CD4-positive, alpha-beta memory T cell (primary cell): ENCODE measurements at regions of chr7 and their contacts with region 1.

Region 1: DNA sequence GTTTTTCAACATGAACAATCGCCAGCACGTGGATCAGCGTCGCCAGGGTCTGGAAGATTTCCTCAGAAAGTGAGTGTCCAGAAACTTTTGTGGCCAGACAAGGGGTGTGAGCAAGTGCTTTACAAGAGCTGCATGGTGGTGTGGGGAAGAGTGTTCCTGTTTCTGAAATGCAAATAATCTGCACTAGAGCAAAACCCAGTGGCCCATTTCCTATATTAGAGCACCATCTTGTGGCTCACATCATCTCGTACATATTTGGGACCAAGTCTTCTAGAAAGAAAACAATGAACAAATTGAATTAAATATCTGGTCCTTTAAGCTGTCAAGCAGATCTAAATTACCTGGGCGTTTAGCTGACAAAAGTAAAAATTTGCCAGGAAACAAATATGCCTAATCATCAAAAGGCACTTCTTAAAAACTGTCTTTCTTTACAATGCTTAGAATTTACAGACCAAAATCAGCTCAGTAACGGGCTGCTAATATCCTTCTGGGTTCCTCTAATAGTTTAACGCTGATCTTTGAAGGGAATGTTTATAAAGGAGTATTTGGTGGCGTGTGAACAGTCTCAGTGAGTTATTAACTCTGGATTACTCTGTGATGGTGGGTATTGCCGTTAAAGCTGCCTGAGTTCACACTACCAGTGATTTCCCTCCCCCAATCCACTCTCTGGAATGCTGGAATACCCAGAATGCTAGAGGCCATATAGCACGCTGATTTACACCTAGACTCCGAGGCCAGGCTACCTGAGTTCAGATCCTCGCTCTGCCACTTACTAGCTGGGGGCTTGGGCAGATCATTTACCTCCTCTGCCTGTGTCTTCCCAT is 73.6 kb downstream of the SNX10 start:
- DNase-seq: peak; percentile 60 to 67 (median 64)
- H3K4me3 ChIP-seq: no peak overlapping the region
- H3K4me3 Mint-ChIP-seq: no peak overlapping the region
- H3K27ac ChIP-seq: no peak overlapping the region
- H3K27ac Mint-ChIP-seq: peak overlapping the region in 2 of 7 donors; percentile 60 to 65
- H3K4me1 ChIP-seq: peaks cover 8% of the 10 kb centered on the region
- H3K4me1 Mint-ChIP-seq: peaks cover 2 to 8% (median 6%) of the 10 kb centered on the region in 4 donors
- H3K27me3 ChIP-seq: no peaks in the 10 kb centered on the region
- H3K27me3 Mint-ChIP-seq: peaks cover 0 to 2% of the 10 kb centered on the region in 2 donors

Region 2: DNA sequence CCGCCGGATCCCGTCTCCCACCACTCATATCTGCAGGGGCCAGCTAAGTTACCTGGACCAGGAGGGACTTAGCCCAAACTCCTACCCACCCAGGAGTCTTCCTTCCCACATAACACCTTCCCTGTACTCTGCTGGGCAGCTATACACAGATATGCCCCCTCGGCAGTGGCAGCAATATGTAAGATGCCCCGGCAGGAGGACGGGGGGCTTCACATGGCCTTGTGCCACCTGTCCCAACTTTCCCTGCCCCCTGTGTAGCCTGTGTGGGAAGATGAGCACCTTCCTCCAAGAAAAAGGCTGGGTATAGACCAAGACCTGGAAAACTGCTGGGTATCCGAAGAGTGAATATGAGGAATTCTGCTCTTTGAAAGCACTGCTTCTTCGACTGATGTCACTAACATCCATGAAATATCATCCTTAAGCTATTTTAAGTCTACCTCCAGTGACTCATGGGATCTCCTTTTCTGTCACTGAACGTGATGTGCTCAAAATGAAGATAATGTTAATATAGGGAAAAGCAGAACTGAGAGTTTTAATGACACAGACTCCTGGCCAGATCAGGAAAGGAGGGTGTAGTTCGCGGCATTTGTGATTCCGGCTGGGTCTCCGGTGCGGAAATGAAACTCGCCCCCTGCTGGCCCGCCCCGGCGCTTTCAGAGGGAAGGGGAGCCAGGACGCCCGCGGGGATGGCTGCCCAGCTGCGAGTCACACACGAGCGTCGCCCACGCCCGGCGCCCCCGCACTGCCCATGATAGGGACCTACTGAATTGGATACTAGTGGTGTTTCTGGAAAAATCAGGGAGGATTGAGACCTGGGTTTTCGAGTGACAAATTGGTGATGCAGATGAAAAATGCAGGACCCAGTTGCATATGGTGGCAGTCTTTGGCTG is 470.1 kb before region 1 on chr7:
- CTCF ChIA-PET with region 1: interaction called, 147 read pairs
- POLR2A ChIA-PET with region 1: interaction called, 7 read pairs
- intact Hi-C with region 1: loop called (anchors 1 kb)
- DNase-seq: peak; percentile 44 to 60 (median 51)
- H3K4me3 ChIP-seq: no peak overlapping the region
- H3K4me3 Mint-ChIP-seq: peak overlapping the region; percentile 50 to 94 (median 56)
- H3K27ac ChIP-seq: no peak overlapping the region
- H3K27ac Mint-ChIP-seq: peak overlapping the region in 4 of 7 donors; percentile 9 to 77 (median 43)
- H3K4me1 ChIP-seq: peaks cover 26% of the 10 kb centered on the region
- H3K4me1 Mint-ChIP-seq: peaks cover 16 to 24% (median 21%) of the 10 kb centered on the region in 4 donors
- H3K27me3 ChIP-seq: no peaks in the 10 kb centered on the region
- H3K27me3 Mint-ChIP-seq: peaks cover 0 to 3% of the 10 kb centered on the region in 2 donors

Region 3: GRCh38 chr7:26078437-26079336 is 286.6 kb before region 1 on chr7:
- CTCF ChIA-PET with region 1: interaction called, 288 read pairs
- POLR2A ChIA-PET with region 1: interaction called, 3 read pairs
- intact Hi-C with region 1: loop called (anchors 1 kb)
- DNase-seq: peak; percentile 73 to 82 (median 75)
- H3K4me3 ChIP-seq: no peak overlapping the region
- H3K4me3 Mint-ChIP-seq: peak overlapping the region in 5 of 8 donors; percentile 21 to 65 (median 46)
- H3K27ac ChIP-seq: no peak overlapping the region
- H3K27ac Mint-ChIP-seq: no peak overlapping the region
- H3K4me1 ChIP-seq: peaks cover 8% of the 10 kb centered on the region
- H3K4me1 Mint-ChIP-seq: peaks cover 0 to 10% (median under 1%) of the 10 kb centered on the region in 4 donors
- H3K27me3 ChIP-seq: peaks cover 15% of the 10 kb centered on the region
- H3K27me3 Mint-ChIP-seq: peaks cover 20 to 46% of the 10 kb centered on the region in 2 donors

Region 4: DNA sequence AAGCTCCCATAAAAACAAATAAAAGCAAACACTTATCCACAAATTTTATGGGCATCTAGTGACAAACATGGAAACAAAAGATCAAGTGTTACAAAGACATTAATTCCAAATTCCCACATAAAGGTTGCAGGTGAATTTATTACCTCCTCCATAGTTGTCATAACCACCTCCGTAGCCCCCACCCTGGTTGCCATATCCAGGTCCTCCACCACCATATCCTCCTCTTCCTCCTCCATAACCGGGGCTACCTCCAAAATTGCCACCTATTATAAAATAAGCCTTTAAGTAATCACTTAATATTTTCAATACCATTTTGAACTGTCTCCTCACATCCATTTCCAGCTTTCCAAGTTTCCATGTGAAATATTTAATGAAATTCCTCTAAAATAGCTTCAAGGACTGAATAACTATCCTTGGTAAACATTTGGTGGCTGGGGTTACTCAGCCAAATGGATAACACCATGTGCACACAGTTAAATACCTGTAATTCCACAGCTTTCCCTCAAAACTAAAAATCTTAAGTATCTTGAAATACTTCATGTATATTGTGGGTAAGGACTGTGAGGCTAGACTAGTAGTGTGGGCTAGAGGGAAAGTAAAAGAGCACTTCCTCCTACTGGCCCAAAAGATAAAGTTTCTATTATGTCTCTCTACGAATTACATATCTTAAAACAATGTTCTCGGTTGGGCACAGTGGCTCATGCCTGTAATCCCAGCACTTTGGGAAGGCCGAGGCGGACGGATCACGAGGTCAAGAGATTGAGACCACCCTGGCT is 171.7 kb before region 1 on chr7:
- CTCF ChIA-PET with region 1: interaction called, 12 read pairs
- POLR2A ChIA-PET with region 1: interaction called, 3 read pairs
- intact Hi-C with region 1: loop called (anchors 1 kb)
- DNase-seq: no peak
- H3K4me3 ChIP-seq: no peak overlapping the region
- H3K4me3 Mint-ChIP-seq: peak overlapping the region; percentile 38 to 100 (median 79)
- H3K27ac ChIP-seq: peak overlapping the region; percentile 36
- H3K27ac Mint-ChIP-seq: peak overlapping the region; percentile 38 to 99 (median 89)
- H3K4me1 ChIP-seq: peaks cover 90% of the 10 kb centered on the region
- H3K4me1 Mint-ChIP-seq: peaks cover 64 to 93% (median 75%) of the 10 kb centered on the region in 4 donors
- H3K27me3 ChIP-seq: no peaks in the 10 kb centered on the region
- H3K27me3 Mint-ChIP-seq: no peaks in the 10 kb centered on the region

Region 5: GRCh38 chr7:26291699-26292538 is 73.4 kb before region 1 on chr7 and contains the start of gene SNX10:
- CTCF ChIA-PET with region 1: interaction called, 18 read pairs
- POLR2A ChIA-PET with region 1: interaction called, 5 read pairs
- intact Hi-C with region 1: loop called (anchors 1 kb)
- DNase-seq: peak; percentile 61 to 74 (median 69)
- H3K4me3 ChIP-seq: peak within 1 kb of the TSS; percentile 43 to 61
- H3K4me3 Mint-ChIP-seq: peak within 1 kb of the TSS; percentile 90 to 97 (median 92)
- H3K27ac ChIP-seq: peak within 1 kb of the TSS; percentile 39
- H3K27ac Mint-ChIP-seq: peak within 1 kb of the TSS; percentile 79 to 93 (median 88)
- H3K4me1 ChIP-seq: peaks cover 32% of the 10 kb centered on the region
- H3K4me1 Mint-ChIP-seq: peaks cover 24 to 42% (median 34%) of the 10 kb centered on the region in 4 donors
- H3K27me3 ChIP-seq: no peaks in the 10 kb centered on the region
- H3K27me3 Mint-ChIP-seq: no peaks in the 10 kb centered on the region
- total RNA-seq, gene SNX10: 8.4 to 8.7 TPM

Region 6: GRCh38 chr7:26376175-26376917 is 11.1 kb after region 1 on chr7:
- CTCF ChIA-PET with region 1: interaction called, 23 read pairs
- POLR2A ChIA-PET with region 1: interaction called, 4 read pairs
- intact Hi-C with region 1: no loop called
- DNase-seq: peak; percentile 22 to 43 (median 24)
- H3K4me3 ChIP-seq: peak overlapping the region; percentile 26 to 56
- H3K4me3 Mint-ChIP-seq: peak overlapping the region; percentile 83 to 95 (median 88)
- H3K27ac ChIP-seq: no peak overlapping the region
- H3K27ac Mint-ChIP-seq: peak overlapping the region in 2 of 7 donors; percentile 24 to 75
- H3K4me1 ChIP-seq: peaks cover 8% of the 10 kb centered on the region
- H3K4me1 Mint-ChIP-seq: peaks cover 0 to 7% (median 5%) of the 10 kb centered on the region in 4 donors
- H3K27me3 ChIP-seq: peaks cover 11% of the 10 kb centered on the region
- H3K27me3 Mint-ChIP-seq: peaks cover 13 to 23% of the 10 kb centered on the region in 2 donors

Region 7: DNA sequence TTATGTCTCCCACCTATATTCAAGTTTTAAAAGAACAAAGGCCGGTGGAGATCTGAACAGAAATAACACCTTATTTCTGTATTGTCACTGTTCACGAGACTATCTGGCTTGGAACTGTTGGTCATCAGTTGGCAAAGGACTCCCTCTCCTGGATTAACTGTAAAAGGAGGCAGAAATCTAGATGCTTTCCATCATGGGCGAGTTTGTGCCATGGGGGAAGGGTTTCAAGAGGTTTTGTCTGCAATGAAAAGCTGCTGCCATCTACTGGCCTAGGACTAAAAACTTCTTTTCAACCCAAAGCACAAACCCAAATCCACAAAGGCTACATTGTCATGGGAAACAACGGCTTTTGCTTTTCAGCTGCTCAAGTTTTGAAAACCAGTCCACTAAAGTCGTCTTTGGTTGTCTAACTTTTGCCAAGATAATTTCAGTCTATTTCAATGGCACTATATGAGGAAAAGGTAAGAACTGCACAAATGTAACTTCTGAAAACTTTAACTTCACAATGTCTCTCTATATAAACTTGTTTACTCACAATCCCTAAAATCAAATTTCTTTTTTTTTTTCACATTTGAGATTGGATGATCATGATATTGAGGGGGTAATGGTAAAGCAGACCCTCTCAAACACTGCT is 302.3 kb after region 1 on chr7:
- CTCF ChIA-PET with region 1: interaction called, 99 read pairs
- POLR2A ChIA-PET with region 1: interaction called, 5 read pairs
- intact Hi-C with region 1: loop called (anchors 1 kb)
- DNase-seq: peak; percentile 58 to 67 (median 59)
- H3K4me3 ChIP-seq: no peak overlapping the region
- H3K4me3 Mint-ChIP-seq: no peak overlapping the region
- H3K27ac ChIP-seq: no peak overlapping the region
- H3K27ac Mint-ChIP-seq: no peak overlapping the region
- H3K4me1 ChIP-seq: peaks cover 16% of the 10 kb centered on the region
- H3K4me1 Mint-ChIP-seq: peaks cover 9 to 19% (median 13%) of the 10 kb centered on the region in 4 donors
- H3K27me3 ChIP-seq: no peaks in the 10 kb centered on the region
- H3K27me3 Mint-ChIP-seq: peaks cover 2 to 3% of the 10 kb centered on the region in 2 donors

Region 8: DNA sequence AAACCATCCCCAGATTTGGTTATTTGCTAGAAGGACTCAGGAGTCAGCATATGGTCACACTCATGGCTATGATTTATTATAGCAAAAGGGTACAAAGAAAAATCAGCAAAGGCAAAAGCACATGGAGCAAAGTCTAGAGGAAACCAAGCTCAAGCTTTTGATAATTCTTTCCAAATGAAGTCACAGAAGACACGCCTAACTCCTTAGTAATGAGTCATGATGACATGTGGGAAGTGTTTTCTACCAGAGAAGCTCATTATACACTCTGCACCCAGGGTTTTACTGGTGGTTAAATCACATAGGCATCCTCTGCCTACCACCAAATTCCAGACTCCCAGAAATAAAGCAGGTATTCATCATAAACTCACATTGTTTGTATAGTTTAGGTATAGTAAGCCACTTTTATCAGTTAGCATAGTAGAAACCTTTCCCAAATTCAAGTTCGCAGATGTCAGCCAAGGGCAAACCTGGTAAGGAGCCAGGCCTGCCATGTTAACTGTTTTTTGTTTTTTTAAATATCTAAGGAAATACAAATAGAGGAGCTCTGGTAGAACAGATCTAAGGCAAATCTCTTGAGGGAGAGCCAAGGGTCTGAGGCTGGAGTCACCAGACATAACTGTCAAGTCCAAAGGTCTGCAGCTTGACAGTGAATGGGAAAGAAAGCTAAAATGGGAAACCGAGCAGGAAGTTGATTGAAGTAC is 1312.8 kb after region 1 on chr7:
- CTCF ChIA-PET with region 1: no interaction called
- POLR2A ChIA-PET with region 1: no interaction called
- intact Hi-C with region 1: no loop called
- DNase-seq: no peak
- H3K4me3 ChIP-seq: no peak overlapping the region
- H3K4me3 Mint-ChIP-seq: no peak overlapping the region
- H3K27ac ChIP-seq: no peak overlapping the region
- H3K27ac Mint-ChIP-seq: no peak overlapping the region
- H3K4me1 ChIP-seq: no peaks in the 10 kb centered on the region
- H3K4me1 Mint-ChIP-seq: no peaks in the 10 kb centered on the region
- H3K27me3 ChIP-seq: no peaks in the 10 kb centered on the region
- H3K27me3 Mint-ChIP-seq: no peaks in the 10 kb centered on the region